PC-9 (cell line): ENCODE measurements at regions of chr3 and their contacts with region 1.

Region 1: DNA sequence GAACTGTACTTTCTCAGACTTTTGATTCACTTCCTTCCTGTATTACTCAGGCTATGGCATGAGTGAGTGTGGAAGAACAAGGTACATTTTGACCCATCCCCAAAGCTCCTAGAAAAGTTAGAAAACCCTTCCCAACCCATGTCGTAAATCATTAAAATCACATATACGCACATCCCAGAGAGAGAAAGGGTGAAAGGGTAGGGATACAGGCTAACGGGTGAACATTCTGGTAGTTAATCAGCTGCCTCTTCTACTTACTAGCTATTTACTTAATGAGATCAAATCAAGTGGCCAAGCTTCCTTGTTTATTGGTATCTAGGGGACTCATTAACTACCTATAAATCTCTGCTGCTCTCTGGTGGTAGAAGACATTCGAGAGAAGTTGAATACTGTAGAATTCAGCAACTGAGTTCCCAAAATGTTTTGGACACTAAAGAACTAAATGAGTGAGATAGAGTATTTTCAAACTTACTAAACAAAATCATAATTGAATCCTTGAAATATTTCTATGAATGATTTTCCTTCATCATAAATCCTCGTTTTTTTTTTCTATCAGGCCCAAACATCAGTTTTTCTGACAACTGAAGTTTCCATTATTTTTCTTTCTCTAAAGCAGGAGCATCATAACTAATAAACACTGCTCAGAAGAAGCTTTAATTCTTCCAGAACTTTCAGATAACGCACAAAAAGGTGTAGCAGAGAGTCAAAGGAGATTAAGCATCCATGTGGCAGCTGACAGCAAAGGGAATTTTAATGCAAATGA is 124.2 kb downstream of the IMPG2 start:
- DNase-seq: peak; percentile 18 to 82
- H3K4me3 ChIP-seq: no peak overlapping the region
- H3K27ac ChIP-seq: no peak overlapping the region
- H3K4me1 ChIP-seq: peaks cover 19% of the 10 kb centered on the region
- H3K27me3 ChIP-seq: no peaks in the 10 kb centered on the region
- CTCF ChIP-seq: peak; percentile 96

Region 2: DNA sequence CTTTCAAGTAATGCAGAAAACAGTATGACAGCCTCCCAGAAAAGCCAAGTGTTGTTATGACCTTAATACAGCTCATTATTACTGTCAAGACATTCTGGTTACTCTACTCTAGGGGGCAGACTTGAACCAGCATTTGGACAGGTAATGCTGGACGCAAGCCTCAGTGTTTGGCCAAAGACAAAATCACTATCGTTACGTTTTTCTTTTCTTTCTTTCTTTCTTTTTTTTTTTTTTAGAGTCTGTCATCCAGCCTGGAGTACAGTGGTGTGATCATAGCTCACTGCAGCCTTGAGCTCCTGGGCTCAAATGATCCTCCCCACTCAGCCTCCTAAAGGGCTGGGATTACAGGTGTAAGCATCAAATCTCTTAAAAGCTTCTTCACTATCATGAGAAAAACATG is 733.1 kb before region 1 on chr3:
- CTCF ChIA-PET with region 1: interaction called, 23 read pairs
- POLR2A ChIA-PET with region 1: interaction called, 3 read pairs
- intact Hi-C with region 1: loop called (anchors 1 kb)
- DNase-seq: peak; percentile 43 to 72
- H3K4me3 ChIP-seq: no peak overlapping the region
- H3K27ac ChIP-seq: no peak overlapping the region
- H3K4me1 ChIP-seq: no peaks in the 10 kb centered on the region
- H3K27me3 ChIP-seq: no peaks in the 10 kb centered on the region
- CTCF ChIP-seq: peak; percentile 98

Region 3: GRCh38 chr3:100561459-100562158 is 634.5 kb before region 1 on chr3:
- CTCF ChIA-PET with region 1: no interaction called
- POLR2A ChIA-PET with region 1: no interaction called
- intact Hi-C with region 1: no loop called
- DNase-seq: no peak
- H3K4me3 ChIP-seq: no peak overlapping the region
- H3K27ac ChIP-seq: no peak overlapping the region
- H3K4me1 ChIP-seq: peaks cover 12% of the 10 kb centered on the region
- H3K27me3 ChIP-seq: no peaks in the 10 kb centered on the region
- CTCF ChIP-seq: no peak

Region 4: GRCh38 chr3:100737334-100737733 is 458.8 kb before region 1 on chr3:
- CTCF ChIA-PET with region 1: interaction called, 3 read pairs
- POLR2A ChIA-PET with region 1: no interaction called
- intact Hi-C with region 1: loop called (anchors 1 kb)
- DNase-seq: no peak
- H3K4me3 ChIP-seq: no peak overlapping the region
- H3K27ac ChIP-seq: no peak overlapping the region
- H3K4me1 ChIP-seq: no peaks in the 10 kb centered on the region
- H3K27me3 ChIP-seq: no peaks in the 10 kb centered on the region
- CTCF ChIP-seq: peak; percentile 76

Region 5: GRCh38 chr3:100796556-100796955 is 399.6 kb before region 1 on chr3:
- CTCF ChIA-PET with region 1: interaction called, 15 read pairs
- POLR2A ChIA-PET with region 1: no interaction called
- intact Hi-C with region 1: loop called (anchors 10 kb)
- DNase-seq: no peak
- H3K4me3 ChIP-seq: no peak overlapping the region
- H3K27ac ChIP-seq: no peak overlapping the region
- H3K4me1 ChIP-seq: no peaks in the 10 kb centered on the region
- H3K27me3 ChIP-seq: no peaks in the 10 kb centered on the region
- CTCF ChIP-seq: peak; percentile 46; the same call in 1 of the 2 replicates

Region 6: GRCh38 chr3:100893590-100893989 is 302.5 kb before region 1 on chr3:
- CTCF ChIA-PET with region 1: interaction called, 9 read pairs
- POLR2A ChIA-PET with region 1: no interaction called
- intact Hi-C with region 1: loop called (anchors 2 kb)
- DNase-seq: no peak
- H3K4me3 ChIP-seq: no peak overlapping the region
- H3K27ac ChIP-seq: no peak overlapping the region
- H3K4me1 ChIP-seq: no peaks in the 10 kb centered on the region
- H3K27me3 ChIP-seq: no peaks in the 10 kb centered on the region
- CTCF ChIP-seq: peak; percentile 79

Region 7: GRCh38 chr3:101036213-101036618 is 159.9 kb before region 1 on chr3:
- CTCF ChIA-PET with region 1: interaction called, 5 read pairs
- POLR2A ChIA-PET with region 1: no interaction called
- intact Hi-C with region 1: loop called (anchors 1 kb)
- DNase-seq: peak; percentile 91 to 99
- H3K4me3 ChIP-seq: peak overlapping the region; percentile 14; the same call in 1 of the 2 replicates
- H3K27ac ChIP-seq: peak overlapping the region; percentile 92
- H3K4me1 ChIP-seq: peaks cover 35% of the 10 kb centered on the region
- H3K27me3 ChIP-seq: no peaks in the 10 kb centered on the region
- CTCF ChIP-seq: no peak

Region 8: GRCh38 chr3:101381809-101382208 is 185.7 kb after region 1 on chr3:
- CTCF ChIA-PET with region 1: no interaction called
- POLR2A ChIA-PET with region 1: no interaction called
- intact Hi-C with region 1: loop called (anchors 10 kb)
- DNase-seq: peak in 1 of 2 experiments; percentile 46
- H3K4me3 ChIP-seq: no peak overlapping the region
- H3K27ac ChIP-seq: no peak overlapping the region
- H3K4me1 ChIP-seq: no peaks in the 10 kb centered on the region
- H3K27me3 ChIP-seq: no peaks in the 10 kb centered on the region
- CTCF ChIP-seq: peak; percentile 83